ENCODE measurements at regions of chr19 and their contacts with region 1.

Region 1: GRCh38 chr19:30535011-30535410 is 162.8 kb downstream of the ZNF536 start:
- DNase-seq: no peak
- ATAC-seq: no peak
- H3K4me3 ChIP-seq: no peak overlapping the region
- H3K4me3 Mint-ChIP-seq: no peak overlapping the region
- H3K27ac ChIP-seq: no peak overlapping the region
- H3K27ac Mint-ChIP-seq: no peak overlapping the region
- H3K4me1 ChIP-seq: no peaks in the 10 kb centered on the region
- H3K4me1 Mint-ChIP-seq: no peaks in the 10 kb centered on the region
- H3K27me3 ChIP-seq: no peaks in the 10 kb centered on the region
- H3K27me3 Mint-ChIP-seq: no peaks in the 10 kb centered on the region
- CTCF ChIP-seq: no peak

Region 2: GRCh38 chr19:28990522-28990921 is 1544.5 kb before region 1 on chr19:
- CTCF ChIA-PET with region 1: no interaction called
- POLR2A ChIA-PET with region 1: no interaction called
- intact Hi-C with region 1: loop called in 1 of 2 experiments (anchors 10 kb)
- DNase-seq: no peak
- ATAC-seq: no peak
- H3K4me3 ChIP-seq: no peak overlapping the region
- H3K4me3 Mint-ChIP-seq: no peak overlapping the region
- H3K27ac ChIP-seq: no peak overlapping the region
- H3K27ac Mint-ChIP-seq: no peak overlapping the region
- H3K4me1 ChIP-seq: no peaks in the 10 kb centered on the region
- H3K4me1 Mint-ChIP-seq: no peaks in the 10 kb centered on the region
- H3K27me3 ChIP-seq: no peaks in the 10 kb centered on the region
- H3K27me3 Mint-ChIP-seq: peaks cover 3% of the 10 kb centered on the region
- CTCF ChIP-seq: no peak

Region 3: DNA sequence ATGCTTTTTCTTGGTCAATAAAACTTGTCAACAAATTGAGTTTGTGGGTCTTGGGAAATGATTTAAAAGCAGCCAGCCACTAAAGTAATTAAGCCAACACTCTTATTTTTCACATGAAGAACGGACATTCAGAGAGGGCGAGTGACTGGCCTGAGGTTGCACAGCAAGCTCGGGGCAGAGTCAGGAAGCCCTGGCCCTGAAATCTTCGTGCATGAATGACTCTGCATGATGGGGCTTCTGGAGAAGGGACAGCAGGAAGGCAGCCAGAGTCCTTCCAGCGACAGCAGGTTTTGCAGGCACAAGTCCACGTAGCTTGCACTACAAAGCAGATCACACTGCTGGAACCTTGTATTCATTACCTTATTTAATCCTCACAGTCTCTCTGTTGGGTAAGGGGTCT is 69.6 kb after region 1 on chr19:
- CTCF ChIA-PET with region 1: no interaction called
- POLR2A ChIA-PET with region 1: no interaction called
- intact Hi-C with region 1: no loop called
- DNase-seq: no peak
- ATAC-seq: no peak
- H3K4me3 ChIP-seq: no peak overlapping the region
- H3K4me3 Mint-ChIP-seq: no peak overlapping the region
- H3K27ac ChIP-seq: no peak overlapping the region
- H3K27ac Mint-ChIP-seq: no peak overlapping the region
- H3K4me1 ChIP-seq: no peaks in the 10 kb centered on the region
- H3K4me1 Mint-ChIP-seq: no peaks in the 10 kb centered on the region
- H3K27me3 ChIP-seq: peaks cover 0 to 3% of the 10 kb centered on the region in 2 experiments
- H3K27me3 Mint-ChIP-seq: peaks cover 7% of the 10 kb centered on the region
- CTCF ChIP-seq: no peak